Activated naive CD4-positive, alpha-beta T cell treated with anti-CD3 and anti-CD28 coated beads, Interleukin-2, amount 10 ng/mL, durations not matched to agents 7 days and 5 days (primary cell): ENCODE measurements at regions of chr14 and their contacts with region 1.

Region 1: GRCh38 chr14:52413729-52414408 is 99.8 kb downstream of the PTGER2 start:
- DNase-seq: no peak
- H3K4me3 Mint-ChIP-seq: peak overlapping the region; percentile 11
- H3K27ac Mint-ChIP-seq: peak overlapping the region; percentile 83
- H3K4me1 Mint-ChIP-seq: peaks cover 76% of the 10 kb centered on the region
- H3K27me3 Mint-ChIP-seq: no peaks in the 10 kb centered on the region

Region 2: DNA sequence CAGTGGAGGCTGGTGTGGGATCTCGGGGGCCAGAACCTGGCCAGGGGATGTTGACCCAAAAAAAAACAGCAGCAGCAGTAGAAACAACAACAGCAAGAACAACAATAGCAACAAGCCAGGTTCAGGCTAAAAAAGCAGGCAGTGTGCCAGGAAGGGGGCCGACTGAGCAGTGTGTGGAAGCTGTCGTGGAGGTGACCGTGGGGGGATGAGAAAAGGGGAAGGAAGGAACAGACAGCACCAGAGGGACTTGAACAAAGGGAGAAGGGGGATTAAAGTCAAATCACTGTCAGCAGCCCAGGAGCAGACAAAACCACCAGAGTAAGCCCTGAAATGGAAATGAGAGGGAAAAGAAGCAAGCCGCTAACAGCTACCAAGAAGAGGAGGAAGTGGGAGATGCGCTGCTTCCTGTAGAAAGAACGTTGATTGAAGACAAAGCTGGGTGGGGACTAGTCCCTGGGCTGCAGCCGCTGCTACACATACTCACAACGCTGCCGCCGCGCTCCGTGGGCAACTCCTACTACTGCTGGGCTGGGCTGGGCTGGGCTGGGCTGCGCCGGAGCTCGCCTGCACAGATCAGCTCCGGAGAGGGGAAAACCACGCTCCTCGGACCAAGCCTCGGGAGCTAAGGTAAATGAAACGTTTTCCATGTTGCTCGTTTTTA is 553.6 kb before region 1 on chr14 and contains the start of gene GNG2:
- CTCF ChIA-PET with region 1: no interaction called
- DNase-seq: peak; percentile 91
- H3K4me3 Mint-ChIP-seq: peak within 1 kb of the TSS; percentile 83
- H3K27ac Mint-ChIP-seq: peak within 1 kb of the TSS; percentile 93
- H3K4me1 Mint-ChIP-seq: peaks cover 57% of the 10 kb centered on the region
- H3K27me3 Mint-ChIP-seq: no peaks in the 10 kb centered on the region

Region 3: DNA sequence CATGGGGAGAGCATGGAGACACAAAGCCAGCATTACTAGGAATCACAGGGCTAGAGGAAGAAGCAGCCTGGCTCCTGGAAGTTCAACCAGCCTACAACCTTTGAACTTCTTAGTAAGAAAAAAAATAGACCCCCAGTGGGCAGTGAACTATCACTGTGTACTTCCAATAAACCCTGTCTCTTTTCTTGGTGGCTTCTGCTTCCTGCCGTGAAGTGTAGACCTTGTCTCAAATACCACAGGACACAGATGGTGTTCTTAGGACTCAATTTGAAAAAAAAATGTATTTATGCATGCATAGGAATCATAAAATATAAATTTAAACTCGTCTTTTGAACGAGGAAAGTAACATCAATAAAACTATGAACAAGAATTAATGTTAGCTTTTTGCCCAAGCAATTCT is 103.3 kb before region 1 on chr14:
- CTCF ChIA-PET with region 1: interaction called, 10 read pairs
- DNase-seq: no peak
- H3K4me3 Mint-ChIP-seq: peak overlapping the region; percentile 95
- H3K27ac Mint-ChIP-seq: no peak overlapping the region
- H3K4me1 Mint-ChIP-seq: peaks cover 62% of the 10 kb centered on the region
- H3K27me3 Mint-ChIP-seq: peaks cover 19% of the 10 kb centered on the region